PC-9 (cell line): ENCODE measurements at regions of chr10 and their contacts with region 1.

Region 1: GRCh38 chr10:118798231-118798662 is 43.5 kb upstream of the CACUL1 start:
- DNase-seq: peak in 1 of 2 experiments; percentile 83
- H3K4me3 ChIP-seq: no peak overlapping the region
- H3K27ac ChIP-seq: 0 out of 2 replicates have a peak overlapping the region, but pooled peaks have one; percentile 34
- H3K4me1 ChIP-seq: peaks cover 29% of the 10 kb centered on the region
- H3K27me3 ChIP-seq: no peaks in the 10 kb centered on the region
- CTCF ChIP-seq: no peak

Region 2: GRCh38 chr10:118783776-118784545 is 14.3 kb before region 1 on chr10:
- CTCF ChIA-PET with region 1: interaction called, 15 read pairs
- POLR2A ChIA-PET with region 1: no interaction called
- intact Hi-C with region 1: no loop called
- DNase-seq: no peak
- H3K4me3 ChIP-seq: no peak overlapping the region
- H3K27ac ChIP-seq: no peak overlapping the region
- H3K4me1 ChIP-seq: no peaks in the 10 kb centered on the region
- H3K27me3 ChIP-seq: no peaks in the 10 kb centered on the region
- CTCF ChIP-seq: no peak

Region 3: DNA sequence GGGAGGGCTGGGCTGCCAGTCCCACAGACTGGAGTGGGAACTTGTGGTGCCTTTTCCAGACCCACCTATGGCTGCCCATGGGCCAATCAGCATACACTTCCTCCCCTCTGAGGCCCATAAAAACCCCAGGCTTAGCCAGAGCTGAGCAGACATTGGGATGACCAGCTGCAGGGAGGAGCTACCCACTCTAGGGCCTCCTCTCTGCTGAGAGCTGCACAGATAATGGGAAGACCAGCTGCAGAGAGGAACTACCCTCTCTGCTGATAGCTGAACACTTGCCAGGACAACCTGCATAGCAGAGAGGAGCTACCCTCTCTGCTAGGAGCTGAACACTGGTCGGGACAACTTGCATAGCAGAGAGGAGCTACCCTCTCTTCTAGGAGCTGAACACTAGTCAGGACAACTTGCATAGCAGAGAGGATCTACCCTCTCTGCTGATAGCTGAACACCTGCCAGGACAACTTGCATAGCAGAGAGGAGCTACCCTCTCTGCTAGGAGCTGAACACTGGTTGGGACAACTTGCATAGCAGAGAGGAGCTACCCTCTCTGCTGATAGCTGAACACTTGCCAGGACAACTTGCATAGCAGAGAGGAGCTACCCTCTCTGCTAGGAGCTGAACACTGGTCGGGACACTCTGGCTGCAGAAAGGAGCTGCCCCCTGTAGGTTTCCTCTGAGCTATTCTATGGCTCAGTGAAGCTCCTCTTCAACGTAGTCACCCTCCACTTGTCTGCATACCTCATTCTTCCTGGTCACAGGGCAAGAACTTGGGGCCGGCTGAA is 44.8 kb after region 1 on chr10:
- CTCF ChIA-PET with region 1: interaction called, 19 read pairs
- POLR2A ChIA-PET with region 1: no interaction called
- intact Hi-C with region 1: no loop called
- DNase-seq: no peak
- H3K4me3 ChIP-seq: no peak overlapping the region
- H3K27ac ChIP-seq: no peak overlapping the region
- H3K4me1 ChIP-seq: peaks cover 36% of the 10 kb centered on the region
- H3K27me3 ChIP-seq: no peaks in the 10 kb centered on the region
- CTCF ChIP-seq: no peak